ENCODE measurements at regions of chr11 and their contacts with region 1.

Region 1: DNA sequence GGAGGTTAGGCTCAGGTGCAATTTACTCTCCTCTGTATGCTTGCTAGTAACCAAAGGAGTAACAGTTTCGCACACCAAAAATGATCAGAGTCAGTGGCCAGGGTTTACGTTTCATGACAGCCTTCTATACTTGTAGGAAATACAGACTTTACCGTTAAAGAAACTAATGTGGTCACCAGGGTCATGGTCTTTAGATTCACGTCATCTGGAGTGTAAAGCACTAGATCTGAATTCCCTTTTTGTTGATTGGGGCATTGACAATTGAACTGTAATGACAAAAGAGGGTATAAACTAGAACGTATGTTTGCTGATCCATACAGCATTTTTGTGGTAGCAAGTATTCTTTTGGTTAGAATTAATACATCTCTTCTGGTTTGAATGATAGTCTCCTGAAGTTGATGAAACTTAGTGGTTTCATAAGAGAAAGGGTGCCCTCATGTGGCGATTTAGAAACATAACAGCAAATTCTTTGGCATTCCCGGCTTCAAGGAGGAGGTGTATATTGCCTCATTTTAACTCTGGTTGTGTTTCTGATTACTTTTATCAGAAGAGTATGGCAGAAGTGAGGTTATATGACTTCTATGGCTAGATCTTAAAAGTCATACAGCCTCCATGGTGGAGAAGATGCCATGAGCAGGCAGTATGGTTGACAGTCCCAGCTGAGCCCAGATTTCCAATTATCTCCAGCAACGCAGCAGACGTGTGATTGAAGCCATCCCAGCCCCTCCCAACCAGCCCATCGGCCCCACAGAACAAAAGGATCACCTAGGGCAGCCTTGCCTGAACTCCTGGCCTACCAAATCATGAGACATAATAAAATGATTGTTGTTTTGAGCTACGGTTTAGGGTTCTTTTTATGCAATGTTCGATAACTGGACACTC is 35.1 kb downstream of the MMP7 start:
- DNase-seq: peak; percentile 66
- H3K27ac ChIP-seq: no peak overlapping the region
- CTCF ChIP-seq: peak; percentile 72

Region 2: GRCh38 chr11:102341844-102342318 is 153.5 kb before region 1 on chr11:
- CTCF ChIA-PET with region 1: interaction called, 11 read pairs
- POLR2A ChIA-PET with region 1: no interaction called
- DNase-seq: peak; percentile 64
- H3K27ac ChIP-seq: no peak overlapping the region
- CTCF ChIP-seq: peak; percentile 78

Region 3: DNA sequence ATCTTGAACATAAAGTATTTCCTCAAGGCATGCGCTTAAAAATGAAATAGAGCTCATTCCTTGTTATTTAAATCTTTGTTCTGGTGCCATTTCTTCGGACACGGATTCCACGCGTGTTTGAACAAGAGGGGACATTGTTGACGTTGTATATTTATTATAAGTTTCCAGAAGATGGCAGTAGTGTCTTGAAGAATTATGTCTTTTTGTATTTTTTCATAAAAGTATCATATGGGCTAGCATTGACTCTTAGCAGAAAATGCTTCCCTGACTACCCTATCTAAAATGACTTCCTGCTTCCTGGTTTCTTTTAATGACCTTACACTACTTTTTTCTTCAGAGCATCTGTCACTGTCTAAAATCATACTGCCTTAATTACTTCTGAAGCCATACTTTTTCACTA is 128.0 kb before region 1 on chr11:
- CTCF ChIA-PET with region 1: interaction called, 10 read pairs
- POLR2A ChIA-PET with region 1: no interaction called
- DNase-seq: no peak
- H3K27ac ChIP-seq: no peak overlapping the region
- CTCF ChIP-seq: no peak

Measured in RWPE1 (cell line).